ENCODE measurements at regions of chr5 and their contacts with region 1.

Region 1: GRCh38 chr5:57499262-57500050 is 16.8 kb upstream of the ACTBL2 start:
- DNase-seq: peak; percentile 69
- H3K4me3 Mint-ChIP-seq: peak overlapping the region; percentile 53
- H3K27ac Mint-ChIP-seq: no peak overlapping the region
- H3K4me1 Mint-ChIP-seq: peaks cover 21% of the 10 kb centered on the region
- H3K27me3 Mint-ChIP-seq: no peaks in the 10 kb centered on the region
- CTCF ChIP-seq: peak; percentile 63

Region 2: GRCh38 chr5:57338068-57338892 is 161.2 kb before region 1 on chr5:
- CTCF ChIA-PET with region 1: interaction called, 5 read pairs
- POLR2A ChIA-PET with region 1: interaction called, 3 read pairs
- intact Hi-C with region 1: loop called (anchors 10 kb)
- DNase-seq: peak; percentile 58
- H3K4me3 Mint-ChIP-seq: no peak overlapping the region
- H3K27ac Mint-ChIP-seq: no peak overlapping the region
- H3K4me1 Mint-ChIP-seq: no peaks in the 10 kb centered on the region
- H3K27me3 Mint-ChIP-seq: no peaks in the 10 kb centered on the region
- CTCF ChIP-seq: peak; percentile 47

Region 3: GRCh38 chr5:57513785-57514184 is 14.3 kb after region 1 on chr5:
- CTCF ChIA-PET with region 1: interaction called, 47 read pairs
- POLR2A ChIA-PET with region 1: no interaction called
- intact Hi-C with region 1: no loop called
- DNase-seq: no peak
- H3K4me3 Mint-ChIP-seq: no peak overlapping the region
- H3K27ac Mint-ChIP-seq: no peak overlapping the region
- H3K4me1 Mint-ChIP-seq: no peaks in the 10 kb centered on the region
- H3K27me3 Mint-ChIP-seq: peaks cover 13% of the 10 kb centered on the region
- CTCF ChIP-seq: no peak

Region 4: GRCh38 chr5:57761491-57761890 is 262.0 kb after region 1 on chr5:
- CTCF ChIA-PET with region 1: interaction called, 11 read pairs
- POLR2A ChIA-PET with region 1: interaction called, 3 read pairs
- intact Hi-C with region 1: no loop called
- DNase-seq: no peak
- H3K4me3 Mint-ChIP-seq: no peak overlapping the region
- H3K27ac Mint-ChIP-seq: no peak overlapping the region
- H3K4me1 Mint-ChIP-seq: no peaks in the 10 kb centered on the region
- H3K27me3 Mint-ChIP-seq: no peaks in the 10 kb centered on the region
- CTCF ChIP-seq: no peak

Region 5: DNA sequence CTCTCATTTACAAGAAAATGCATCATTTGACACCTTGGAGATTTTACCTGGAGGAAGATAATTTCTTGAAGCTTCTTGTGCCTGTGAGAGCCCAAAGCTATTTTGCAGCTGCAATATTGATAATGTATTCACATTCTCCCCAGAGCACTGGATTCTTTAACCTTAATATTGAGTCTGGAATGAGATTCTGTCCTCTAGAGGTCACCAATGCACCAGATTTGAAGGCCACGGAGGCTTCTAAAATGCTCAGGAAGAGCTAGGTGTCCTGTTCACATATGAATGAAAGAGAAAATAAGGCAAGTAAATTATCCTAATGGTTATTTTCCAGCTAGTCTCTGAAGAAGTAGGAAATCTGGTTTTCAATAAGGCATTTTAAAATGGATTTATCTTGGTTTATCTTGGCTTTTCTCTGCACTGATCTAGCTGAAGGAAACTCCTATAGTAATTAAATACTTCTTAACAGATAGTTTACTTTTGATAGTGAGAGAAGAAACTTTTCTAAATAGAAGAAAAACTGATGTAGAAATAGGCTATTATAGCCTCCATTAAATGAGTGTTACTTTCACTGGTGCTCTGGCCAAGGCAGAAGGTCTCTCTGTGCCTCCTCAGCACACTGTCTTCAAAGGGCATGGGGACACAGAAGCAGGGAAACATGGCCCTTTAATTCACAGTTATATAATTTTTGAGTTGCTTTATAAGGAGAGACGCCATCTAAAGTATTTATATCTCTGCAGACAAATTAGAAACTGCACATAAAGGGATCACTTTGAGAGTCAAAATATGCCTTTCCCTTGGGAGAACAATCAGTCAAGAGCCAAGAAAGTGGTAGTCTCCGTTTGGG is 280.1 kb after region 1 on chr5:
- CTCF ChIA-PET with region 1: interaction called, 74 read pairs
- POLR2A ChIA-PET with region 1: interaction called, 5 read pairs
- intact Hi-C with region 1: loop called (anchors 1 kb)
- DNase-seq: peak; percentile 78
- H3K4me3 Mint-ChIP-seq: no peak overlapping the region
- H3K27ac Mint-ChIP-seq: no peak overlapping the region
- H3K4me1 Mint-ChIP-seq: peaks cover 6% of the 10 kb centered on the region
- H3K27me3 Mint-ChIP-seq: no peaks in the 10 kb centered on the region
- CTCF ChIP-seq: peak; percentile 64

Region 6: DNA sequence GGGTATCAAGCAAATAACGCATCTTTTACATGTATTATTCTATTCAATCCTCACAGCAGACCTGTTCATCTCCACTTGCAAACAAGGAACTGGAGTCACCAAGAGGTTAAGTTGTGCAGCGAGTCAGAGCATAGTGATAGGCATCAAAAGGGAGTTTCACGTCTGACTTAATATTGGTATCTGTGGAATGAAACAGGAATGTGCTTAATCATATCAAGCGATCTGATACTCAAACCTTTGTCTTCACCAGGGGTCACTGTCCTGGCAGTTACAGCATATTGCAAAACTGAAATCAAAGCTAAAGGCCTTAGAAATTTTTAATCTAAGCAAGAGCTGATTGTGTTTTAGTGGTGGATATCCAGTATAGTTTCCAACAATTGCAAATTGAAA is 688.8 kb after region 1 on chr5:
- CTCF ChIA-PET with region 1: no interaction called
- POLR2A ChIA-PET with region 1: no interaction called
- intact Hi-C with region 1: loop called (anchors 10 kb)
- DNase-seq: peak; percentile 54
- H3K4me3 Mint-ChIP-seq: no peak overlapping the region
- H3K27ac Mint-ChIP-seq: no peak overlapping the region
- H3K4me1 Mint-ChIP-seq: peaks cover 28% of the 10 kb centered on the region
- H3K27me3 Mint-ChIP-seq: no peaks in the 10 kb centered on the region
- CTCF ChIP-seq: no peak

Region 7: GRCh38 chr5:59436364-59437148 is 1937.1 kb after region 1 on chr5:
- CTCF ChIA-PET with region 1: no interaction called
- POLR2A ChIA-PET with region 1: no interaction called
- intact Hi-C with region 1: no loop called
- DNase-seq: no peak
- H3K4me3 Mint-ChIP-seq: no peak overlapping the region
- H3K27ac Mint-ChIP-seq: no peak overlapping the region
- H3K4me1 Mint-ChIP-seq: no peaks in the 10 kb centered on the region
- H3K27me3 Mint-ChIP-seq: no peaks in the 10 kb centered on the region
- CTCF ChIP-seq: no peak